ENCODE measurements at regions of chr14 and their contacts with region 1.

Region 1: DNA sequence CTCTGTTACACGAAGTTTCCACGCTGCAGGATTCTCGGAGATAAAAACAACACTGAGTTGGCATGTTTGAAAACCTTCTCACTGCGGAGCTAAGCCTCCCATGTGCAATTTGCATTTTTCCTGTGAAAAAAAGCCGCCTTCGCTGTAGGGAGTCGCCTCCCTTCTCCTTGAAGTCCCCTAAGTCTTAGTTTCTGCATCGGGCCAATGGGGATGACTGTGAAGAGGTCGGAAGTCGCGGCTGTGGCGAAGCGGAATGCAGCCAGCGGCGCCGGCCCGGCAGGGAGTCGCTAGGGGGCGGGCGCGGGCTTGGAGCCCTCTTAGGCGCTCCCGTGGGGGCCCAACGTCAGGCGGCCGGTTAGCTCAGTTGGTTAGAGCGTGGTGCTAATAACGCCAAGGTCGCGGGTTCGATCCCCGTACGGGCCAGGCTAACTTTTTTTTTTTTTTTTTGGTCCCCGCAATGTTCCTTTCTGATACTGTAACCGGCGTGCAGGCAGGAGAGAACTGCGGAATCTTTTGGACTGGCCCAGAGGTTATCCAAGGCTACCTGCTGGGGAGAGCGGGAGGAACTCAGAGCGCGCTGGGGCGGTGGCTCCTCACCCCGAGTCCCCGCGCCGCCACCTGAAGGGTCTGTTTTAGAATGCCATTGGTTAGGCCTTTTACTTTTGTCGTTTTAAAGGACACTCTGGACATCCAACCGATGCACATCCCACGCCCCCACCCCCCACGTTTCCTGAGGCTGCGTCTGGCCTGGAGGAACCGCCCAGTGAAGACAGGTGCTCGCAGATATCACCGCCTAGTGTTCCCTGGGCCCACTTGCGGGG is 2.6 kb upstream of the ZNF839 start:
- DNase-seq: peak; percentile 95
- H3K4me3 Mint-ChIP-seq: peak overlapping the region; percentile 95
- H3K27ac Mint-ChIP-seq: peak overlapping the region; percentile 98
- H3K4me1 Mint-ChIP-seq: peaks cover 56% of the 10 kb centered on the region
- H3K27me3 Mint-ChIP-seq: no peaks in the 10 kb centered on the region

Region 2: GRCh38 chr14:101823511-101824120 is 493.3 kb before region 1 on chr14:
- CTCF ChIA-PET with region 1: no interaction called
- intact Hi-C with region 1: loop called (anchors 5 kb)
- DNase-seq: peak; percentile 86
- H3K4me3 Mint-ChIP-seq: peak overlapping the region; percentile 70
- H3K27ac Mint-ChIP-seq: peak overlapping the region; percentile 98
- H3K4me1 Mint-ChIP-seq: peaks cover 86% of the 10 kb centered on the region
- H3K27me3 Mint-ChIP-seq: no peaks in the 10 kb centered on the region

Region 3: GRCh38 chr14:102046343-102047278 is 270.3 kb before region 1 on chr14:
- CTCF ChIA-PET with region 1: interaction called, 4 read pairs
- intact Hi-C with region 1: loop called (anchors 5 kb)
- DNase-seq: peak; percentile 48
- H3K4me3 Mint-ChIP-seq: no peak overlapping the region
- H3K27ac Mint-ChIP-seq: no peak overlapping the region
- H3K4me1 Mint-ChIP-seq: no peaks in the 10 kb centered on the region
- H3K27me3 Mint-ChIP-seq: no peaks in the 10 kb centered on the region

Region 4: DNA sequence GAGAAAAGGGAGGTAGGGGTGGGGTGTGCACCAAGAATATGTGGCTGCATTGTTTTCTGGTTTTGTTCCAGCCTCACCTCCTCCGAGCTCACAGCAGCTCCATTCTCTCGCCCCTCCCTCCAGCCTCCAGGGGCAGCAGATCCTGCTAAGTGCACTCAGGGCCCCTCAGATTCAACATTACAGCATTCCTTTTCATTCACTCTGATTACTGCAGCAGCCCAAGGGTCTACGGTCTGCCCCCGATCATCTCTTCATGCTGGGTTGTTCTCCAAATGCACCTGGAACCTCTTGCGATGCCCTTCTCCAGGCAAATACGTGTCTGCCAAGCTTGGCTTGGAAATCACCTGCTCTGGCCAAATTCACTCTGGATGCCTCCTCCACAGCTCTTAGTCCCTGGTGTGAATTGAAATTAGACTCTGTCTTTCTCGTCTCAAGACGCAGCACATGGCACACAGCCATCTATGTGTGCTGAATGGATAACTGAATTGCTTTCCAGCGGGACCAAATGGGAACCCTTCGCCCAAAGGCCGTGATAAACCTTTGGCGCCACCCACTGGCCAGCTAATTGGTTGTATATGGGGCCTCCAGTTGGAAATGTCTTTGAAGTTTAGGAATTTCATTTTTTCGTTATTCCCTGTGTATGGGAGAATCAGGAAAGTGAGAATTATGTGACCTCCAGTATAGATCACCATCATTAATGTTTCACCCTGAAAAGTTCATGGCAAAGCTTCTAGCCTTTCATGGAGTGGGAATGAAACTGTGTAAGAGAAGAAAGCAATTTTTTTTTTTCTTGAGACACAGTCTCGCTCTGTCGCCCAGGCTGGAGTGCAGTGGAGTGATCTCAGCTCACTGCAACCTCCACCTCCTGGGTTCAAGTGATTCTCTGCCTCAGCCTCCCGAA is 220.5 kb before region 1 on chr14:
- CTCF ChIA-PET with region 1: interaction called, 16 read pairs
- intact Hi-C with region 1: no loop called
- DNase-seq: peak; percentile 83
- H3K4me3 Mint-ChIP-seq: no peak overlapping the region
- H3K27ac Mint-ChIP-seq: no peak overlapping the region
- H3K4me1 Mint-ChIP-seq: peaks cover 15% of the 10 kb centered on the region
- H3K27me3 Mint-ChIP-seq: no peaks in the 10 kb centered on the region

Region 5: DNA sequence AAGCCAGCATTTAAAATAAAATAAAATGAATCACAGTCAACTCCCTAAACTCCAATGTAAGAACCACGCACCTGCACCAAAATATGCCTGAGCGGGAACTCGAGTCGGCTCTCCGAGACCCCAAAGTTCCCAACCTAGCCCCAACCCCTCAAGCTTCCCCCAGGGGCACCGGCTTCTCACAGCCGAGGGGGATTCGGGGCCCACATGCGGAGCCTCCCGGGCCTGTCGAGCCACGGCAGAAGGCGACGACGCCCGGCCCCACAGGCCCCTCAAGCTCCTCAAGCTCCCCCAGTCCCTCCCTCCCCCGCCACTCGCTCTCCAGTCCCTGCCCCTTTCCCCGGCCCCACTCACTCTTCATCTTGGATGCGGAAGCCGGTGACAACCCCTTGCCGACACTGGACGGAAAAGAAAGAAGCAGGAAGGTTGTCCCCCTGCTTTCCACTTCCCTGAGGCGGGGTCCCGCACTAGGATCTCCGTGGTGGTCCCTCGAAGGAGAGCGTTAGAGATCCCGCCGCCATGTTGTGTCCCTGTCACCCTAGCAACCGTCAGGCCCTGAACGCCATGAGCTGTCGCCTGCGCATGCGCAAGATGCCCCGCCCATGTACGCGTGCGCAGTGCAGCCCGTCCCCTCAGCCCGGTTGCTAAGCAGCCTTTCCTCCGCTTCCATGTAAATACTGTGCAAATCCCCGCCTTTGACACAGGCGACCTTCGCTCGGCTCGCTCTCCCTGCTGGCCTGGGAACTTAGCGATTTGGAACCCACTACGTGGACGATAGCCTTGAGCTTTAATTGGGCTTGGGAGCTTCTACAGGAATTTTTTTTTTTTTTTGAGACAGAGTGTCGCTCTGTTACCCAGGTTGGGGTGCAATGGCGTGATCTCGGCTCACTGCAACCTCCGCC is 12.1 kb before region 1 on chr14 and contains the start of gene MOK:
- CTCF ChIA-PET with region 1: interaction called, 10 read pairs
- intact Hi-C with region 1: loop called (anchors 1 kb)
- DNase-seq: peak; percentile 96
- H3K4me3 Mint-ChIP-seq: peak within 1 kb of the TSS; percentile 94
- H3K27ac Mint-ChIP-seq: peak within 1 kb of the TSS; percentile 82
- H3K4me1 Mint-ChIP-seq: peaks cover 9% of the 10 kb centered on the region
- H3K27me3 Mint-ChIP-seq: peaks cover 1% of the 10 kb centered on the region
- total RNA-seq, gene MOK: 1.6 TPM

Region 6: DNA sequence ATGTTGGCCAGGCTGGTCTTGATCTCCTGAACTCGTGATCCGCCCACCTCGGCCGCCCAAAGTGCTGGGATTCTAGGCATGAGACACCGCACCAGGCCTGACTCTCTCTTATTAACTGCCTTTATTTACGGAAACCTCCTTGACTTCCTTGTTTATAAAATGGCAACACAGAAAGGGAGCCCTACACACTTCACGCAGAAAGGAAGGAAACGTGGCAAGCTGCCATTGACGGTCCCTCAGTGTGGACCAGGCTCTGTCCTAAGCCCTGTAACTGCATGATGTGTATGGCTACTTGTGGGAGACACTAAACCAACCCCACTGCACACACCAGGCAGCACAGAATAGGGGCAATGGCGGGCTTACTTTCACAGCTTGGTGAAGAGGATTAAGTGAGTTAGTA is 34.1 kb after region 1 on chr14:
- CTCF ChIA-PET with region 1: no interaction called
- intact Hi-C with region 1: no loop called
- DNase-seq: no peak
- H3K4me3 Mint-ChIP-seq: no peak overlapping the region
- H3K27ac Mint-ChIP-seq: no peak overlapping the region
- H3K4me1 Mint-ChIP-seq: peaks cover 2% of the 10 kb centered on the region
- H3K27me3 Mint-ChIP-seq: no peaks in the 10 kb centered on the region

Region 7: DNA sequence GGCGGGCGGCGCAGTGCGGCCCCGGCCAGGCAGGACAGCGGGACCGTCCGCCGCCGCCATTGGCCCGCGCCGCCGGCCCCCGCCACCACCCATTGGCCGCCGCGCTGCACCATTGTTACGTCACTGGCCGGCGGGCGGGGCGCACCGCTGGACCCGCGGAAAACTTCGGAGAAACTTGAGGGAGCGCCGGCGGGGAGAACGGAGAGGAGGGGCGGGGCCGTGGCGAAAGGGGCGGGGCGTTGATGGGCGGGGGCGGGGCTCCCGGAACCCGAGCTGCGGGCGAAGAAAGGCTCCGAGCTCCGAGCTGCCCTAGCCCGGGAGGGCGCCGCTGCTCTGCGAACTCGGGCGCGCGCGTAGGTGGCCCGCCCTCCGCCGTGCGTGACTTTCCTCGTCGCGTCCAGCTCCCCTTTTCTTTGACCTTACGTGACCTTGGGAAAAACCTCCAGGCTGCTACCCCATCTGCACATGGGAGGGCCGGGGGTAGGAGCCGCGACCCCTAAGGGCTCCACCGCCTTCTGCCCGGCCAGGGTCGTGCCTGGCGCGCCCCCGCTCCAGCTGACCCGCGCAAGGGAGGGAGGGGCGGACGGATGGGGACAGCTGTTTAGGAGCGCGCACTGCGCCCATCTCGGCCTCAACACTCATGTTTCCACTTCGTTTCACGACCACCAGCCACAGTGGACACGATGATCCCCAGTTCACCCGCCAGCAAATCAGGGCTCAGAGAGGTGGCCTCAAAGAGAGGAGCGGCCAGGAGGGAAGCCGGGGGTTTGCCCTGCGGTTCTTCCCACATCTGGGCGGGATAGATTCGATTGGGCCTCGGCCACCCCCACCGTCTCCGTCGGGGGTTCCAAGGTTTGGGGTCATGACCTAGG is 193.0 kb after region 1 on chr14 and contains the start of gene ANKRD9:
- CTCF ChIA-PET with region 1: interaction called, 16 read pairs
- intact Hi-C with region 1: loop called (anchors 2 kb)
- DNase-seq: peak; percentile 91
- H3K4me3 Mint-ChIP-seq: peak within 1 kb of the TSS; percentile 84
- H3K27ac Mint-ChIP-seq: no peak within 1 kb of the TSS
- H3K4me1 Mint-ChIP-seq: peaks cover 8% of the 10 kb centered on the region
- H3K27me3 Mint-ChIP-seq: no peaks in the 10 kb centered on the region
- total RNA-seq, gene ANKRD9: 11.5 to 13.3 TPM

Region 8: GRCh38 chr14:102555264-102555831 is 238.4 kb after region 1 on chr14:
- CTCF ChIA-PET with region 1: no interaction called
- intact Hi-C with region 1: no loop called
- DNase-seq: peak; percentile 56
- H3K4me3 Mint-ChIP-seq: peak overlapping the region; percentile 52
- H3K27ac Mint-ChIP-seq: no peak overlapping the region
- H3K4me1 Mint-ChIP-seq: no peaks in the 10 kb centered on the region
- H3K27me3 Mint-ChIP-seq: no peaks in the 10 kb centered on the region

Region 9: GRCh38 chr14:102591889-102592763 is 275.2 kb after region 1 on chr14 and contains the start of gene RCOR1:
- CTCF ChIA-PET with region 1: interaction called, 4 read pairs
- intact Hi-C with region 1: loop called (anchors 2 kb)
- DNase-seq: peak; percentile 98
- H3K4me3 Mint-ChIP-seq: peak within 1 kb of the TSS; percentile 85
- H3K27ac Mint-ChIP-seq: peak within 1 kb of the TSS; percentile 91
- H3K4me1 Mint-ChIP-seq: peaks cover 31% of the 10 kb centered on the region
- H3K27me3 Mint-ChIP-seq: no peaks in the 10 kb centered on the region
- total RNA-seq, gene RCOR1: 11.9 to 12.2 TPM

Measured in activated naive CD4-positive, alpha-beta T cell treated with anti-CD3 and anti-CD28 coated beads for 36 hours (primary cell).